ENCODE measurements at regions of chr11 and their contacts with region 1.

Region 1: DNA sequence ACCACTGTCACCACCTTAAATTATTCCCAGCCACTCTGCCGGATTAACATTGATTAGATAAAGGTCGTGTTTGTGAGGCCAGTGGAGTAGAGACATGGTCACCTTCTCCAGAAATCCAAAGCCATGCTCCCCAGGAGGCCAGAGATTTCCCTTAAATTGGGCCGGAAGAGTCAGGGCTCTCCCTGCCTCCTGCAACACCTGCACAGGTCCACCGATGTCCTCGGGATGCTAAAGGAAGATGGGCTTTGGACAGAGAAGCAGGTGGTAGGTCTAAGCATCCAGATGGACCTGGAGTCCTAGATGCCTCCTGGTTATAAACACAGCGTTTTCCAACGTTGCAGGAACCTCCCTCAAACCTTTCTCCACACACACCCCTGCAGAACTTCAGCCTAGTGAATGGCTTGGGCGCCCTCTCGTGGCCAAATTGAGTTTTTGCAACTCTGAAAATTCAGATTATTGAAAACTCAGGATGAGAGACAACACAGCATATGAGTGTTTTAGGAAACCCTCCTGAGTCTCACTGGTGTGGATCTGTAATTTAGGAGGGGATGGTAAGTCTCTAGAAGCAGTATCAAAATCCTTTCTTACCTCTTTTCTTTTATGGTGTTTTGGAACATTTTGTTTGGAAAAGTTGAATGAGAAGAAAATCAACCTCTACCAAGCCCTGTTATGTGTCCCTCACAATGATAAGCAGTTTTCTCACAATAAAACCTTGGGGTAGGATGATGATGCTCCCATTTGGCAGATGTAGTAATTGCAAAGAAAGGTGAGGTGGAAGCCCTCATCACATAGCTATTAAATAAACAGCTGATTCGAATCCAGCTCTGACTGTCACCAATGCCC is 109.6 kb downstream of the RRAS2 start:
- DNase-seq: peak; percentile 77
- H3K4me3 Mint-ChIP-seq: peak overlapping the region; percentile 5
- H3K27ac Mint-ChIP-seq: no peak overlapping the region
- H3K4me1 Mint-ChIP-seq: peaks cover 23% of the 10 kb centered on the region
- H3K27me3 Mint-ChIP-seq: peaks cover 11% of the 10 kb centered on the region

Region 2: DNA sequence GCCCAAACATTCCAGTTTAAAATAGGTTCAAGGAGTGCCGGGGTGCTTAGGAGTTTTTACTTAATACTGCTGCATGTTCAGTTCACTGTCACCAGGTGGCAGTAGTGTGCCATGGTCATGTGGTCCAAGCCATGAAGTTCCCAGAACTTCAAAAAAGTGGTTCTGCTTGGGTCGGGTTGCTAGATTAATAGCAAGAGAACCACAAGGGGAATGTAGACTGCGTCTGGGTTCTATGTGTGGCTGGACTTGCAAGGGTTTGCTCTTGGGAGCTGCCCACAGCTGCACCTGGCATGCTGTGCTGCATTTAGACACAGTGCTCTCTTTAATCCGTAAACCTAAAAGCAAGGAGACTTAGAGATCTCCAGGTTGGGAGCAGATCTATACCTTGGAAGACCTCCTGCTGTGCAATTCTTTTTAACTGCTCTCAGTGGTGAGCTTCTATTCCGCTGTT is 293.3 kb before region 1 on chr11:
- CTCF ChIA-PET with region 1: interaction called, 27 read pairs
- POLR2A ChIA-PET with region 1: no interaction called
- DNase-seq: peak; percentile 59
- H3K4me3 Mint-ChIP-seq: no peak overlapping the region
- H3K27ac Mint-ChIP-seq: no peak overlapping the region
- H3K4me1 Mint-ChIP-seq: peaks cover 1% of the 10 kb centered on the region
- H3K27me3 Mint-ChIP-seq: peaks cover 38% of the 10 kb centered on the region

Region 3: DNA sequence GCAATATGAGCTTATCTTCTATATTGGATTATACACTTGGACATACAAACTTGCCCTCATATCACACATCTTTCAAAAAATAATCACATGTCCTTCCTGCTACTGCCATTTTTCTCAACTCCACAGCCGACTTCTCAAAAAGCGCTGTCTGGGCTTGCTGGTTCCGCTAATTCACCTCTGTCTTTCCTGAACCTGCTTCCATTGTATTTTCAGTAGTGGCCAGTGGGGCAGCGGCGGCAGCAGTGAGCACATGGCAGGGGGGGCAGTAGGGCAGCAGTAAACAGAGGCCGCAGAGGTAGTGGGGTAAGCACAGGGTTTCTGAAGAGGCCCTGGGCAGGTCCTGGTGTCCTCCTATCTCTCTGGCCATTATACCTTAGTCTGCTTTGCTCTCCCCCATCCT is 16.7 kb before region 1 on chr11:
- CTCF ChIA-PET with region 1: no interaction called
- POLR2A ChIA-PET with region 1: no interaction called
- DNase-seq: no peak
- H3K4me3 Mint-ChIP-seq: no peak overlapping the region
- H3K27ac Mint-ChIP-seq: no peak overlapping the region
- H3K4me1 Mint-ChIP-seq: peaks cover 4% of the 10 kb centered on the region
- H3K27me3 Mint-ChIP-seq: peaks cover 21% of the 10 kb centered on the region